ENCODE measurements at regions of chr9 and their contacts with region 1.

Region 1: GRCh38 chr9:5529683-5530221 is 19.4 kb downstream of the PDCD1LG2 start:
- DNase-seq: peak; percentile 73
- ATAC-seq: peak; percentile 62
- H3K4me3 ChIP-seq: peak overlapping the region; percentile 47; the same call in 1 of the 2 replicates
- H3K27ac ChIP-seq: peak overlapping the region; percentile 93
- H3K4me1 ChIP-seq: peaks cover 43% of the 10 kb centered on the region
- H3K27me3 ChIP-seq: no peaks in the 10 kb centered on the region
- CTCF ChIP-seq: no peak
- EP300 ChIP-seq: peak; percentile 9 to 59; a peak in 1 of 4 replicates
- POLR2A ChIP-seq: no peak
- RAD21 ChIP-seq: 0 out of 2 replicates have a peak, but pooled peaks have one; percentile 0

Region 2: GRCh38 chr9:5459289-5459829 is 70.4 kb before region 1 on chr9:
- CTCF ChIA-PET with region 1: no interaction called
- POLR2A ChIA-PET with region 1: interaction called, 5 read pairs
- RAD21 ChIA-PET with region 1: interaction called, 4 read pairs
- SMC1A ChIA-PET with region 1: interaction called, 19 read pairs
- in situ Hi-C with region 1: no loop called
- intact Hi-C with region 1: loop called (anchors 5 kb)
- DNase-seq: no peak
- ATAC-seq: peak; percentile 55
- H3K4me3 ChIP-seq: peak overlapping the region; percentile 35
- H3K27ac ChIP-seq: peak overlapping the region; percentile 81
- H3K4me1 ChIP-seq: peaks cover 32% of the 10 kb centered on the region
- H3K27me3 ChIP-seq: no peaks in the 10 kb centered on the region
- CTCF ChIP-seq: no peak
- EP300 ChIP-seq: peak; percentile 69 to 84; a peak in 2 of 4 replicates
- POLR2A ChIP-seq: no peak
- RAD21 ChIP-seq: no peak

Region 3: GRCh38 chr9:5479994-5480694 is 49.6 kb before region 1 on chr9:
- CTCF ChIA-PET with region 1: interaction called, 6 read pairs
- POLR2A ChIA-PET with region 1: interaction called, 5 read pairs
- RAD21 ChIA-PET with region 1: interaction called, 7 read pairs
- SMC1A ChIA-PET with region 1: interaction called, 15 read pairs
- in situ Hi-C with region 1: no loop called
- intact Hi-C with region 1: no loop called
- DNase-seq: no peak
- ATAC-seq: peak; percentile 85
- H3K4me3 ChIP-seq: no peak overlapping the region
- H3K27ac ChIP-seq: peak overlapping the region; percentile 62
- H3K4me1 ChIP-seq: peaks cover 27% of the 10 kb centered on the region
- H3K27me3 ChIP-seq: no peaks in the 10 kb centered on the region
- CTCF ChIP-seq: no peak
- EP300 ChIP-seq: peak; percentile 37 to 47; a peak in 2 of 4 replicates
- POLR2A ChIP-seq: no peak
- RAD21 ChIP-seq: no peak

Region 4: DNA sequence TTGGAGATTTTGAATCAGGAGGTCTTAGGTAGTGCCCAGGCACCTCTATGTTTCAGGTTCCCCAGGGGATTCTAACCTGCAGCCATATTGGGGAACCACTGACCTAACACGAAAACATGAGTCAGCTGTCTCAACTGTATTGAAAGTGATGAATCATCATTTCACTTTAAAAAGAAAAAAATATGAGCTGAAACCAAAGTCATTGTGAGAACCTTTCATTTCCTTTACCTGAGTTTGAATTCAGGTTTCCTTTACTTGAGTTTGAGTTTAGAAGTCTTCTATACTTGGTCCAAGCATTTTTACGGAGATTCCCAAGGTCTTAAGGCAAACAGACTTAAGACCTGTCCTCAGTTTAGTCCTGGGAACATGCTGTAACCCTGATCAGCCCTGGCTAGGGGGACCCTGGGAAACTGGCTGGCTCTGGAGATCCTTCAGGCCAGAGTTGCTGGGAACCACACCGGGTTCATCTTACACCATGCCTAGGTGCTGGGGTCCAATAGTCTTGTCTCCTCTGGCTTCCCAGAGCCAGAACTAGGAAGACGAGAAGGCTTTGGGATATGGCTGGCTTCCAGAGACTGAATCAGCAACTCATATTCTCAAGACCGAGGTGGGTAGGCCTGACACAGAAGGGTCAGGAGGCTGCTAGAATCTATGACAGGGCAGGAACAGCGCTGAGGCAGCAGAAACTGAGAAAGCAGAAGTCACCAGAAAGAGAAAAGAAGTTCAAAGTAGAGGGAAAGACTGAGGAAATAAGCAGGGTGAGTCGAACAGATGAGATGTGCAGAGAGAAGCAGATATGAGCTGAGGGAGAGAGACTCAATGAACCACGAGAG is 35.9 kb before region 1 on chr9:
- CTCF ChIA-PET with region 1: interaction called, 3 read pairs
- POLR2A ChIA-PET with region 1: interaction called, 4 read pairs
- RAD21 ChIA-PET with region 1: interaction called, 5 read pairs
- SMC1A ChIA-PET with region 1: interaction called, 18 read pairs
- in situ Hi-C with region 1: no loop called
- intact Hi-C with region 1: no loop called
- DNase-seq: peak; percentile 96
- ATAC-seq: peak; percentile 91
- H3K4me3 ChIP-seq: peak overlapping the region; percentile 30; the same call in 1 of the 2 replicates
- H3K27ac ChIP-seq: peak overlapping the region; percentile 92
- H3K4me1 ChIP-seq: peaks cover 16% of the 10 kb centered on the region
- H3K27me3 ChIP-seq: no peaks in the 10 kb centered on the region
- CTCF ChIP-seq: no peak
- EP300 ChIP-seq: peak in 1 of 2 experiments; percentile 65; a peak in 1 of 4 replicates
- POLR2A ChIP-seq: peak; percentile 63
- RAD21 ChIP-seq: 0 out of 2 replicates have a peak, but pooled peaks have one; percentile 9

Region 5: GRCh38 chr9:5518171-5518936 is 11.4 kb before region 1 on chr9:
- CTCF ChIA-PET with region 1: interaction called, 31 read pairs
- POLR2A ChIA-PET with region 1: interaction called, 67 read pairs
- RAD21 ChIA-PET with region 1: interaction called, 50 read pairs
- SMC1A ChIA-PET with region 1: interaction called, 87 read pairs
- in situ Hi-C with region 1: no loop called
- intact Hi-C with region 1: no loop called
- DNase-seq: no peak
- ATAC-seq: peak; percentile 49
- H3K4me3 ChIP-seq: peak overlapping the region; percentile 35; the same call in 1 of the 2 replicates
- H3K27ac ChIP-seq: peak overlapping the region; percentile 58
- H3K4me1 ChIP-seq: peaks cover 47% of the 10 kb centered on the region
- H3K27me3 ChIP-seq: no peaks in the 10 kb centered on the region
- CTCF ChIP-seq: no peak
- EP300 ChIP-seq: no peak
- POLR2A ChIP-seq: no peak
- RAD21 ChIP-seq: 0 out of 2 replicates have a peak, but pooled peaks have one; percentile 17

Region 6: GRCh38 chr9:5549658-5550310 is 20.0 kb after region 1 on chr9:
- CTCF ChIA-PET with region 1: interaction called, 6 read pairs
- POLR2A ChIA-PET with region 1: interaction called, 9 read pairs
- RAD21 ChIA-PET with region 1: interaction called, 8 read pairs
- SMC1A ChIA-PET with region 1: interaction called, 22 read pairs
- in situ Hi-C with region 1: no loop called
- intact Hi-C with region 1: no loop called
- DNase-seq: no peak
- ATAC-seq: no peak
- H3K4me3 ChIP-seq: no peak overlapping the region
- H3K27ac ChIP-seq: no peak overlapping the region
- H3K4me1 ChIP-seq: peaks cover 6% of the 10 kb centered on the region; the same call in 1 of the 2 replicates
- H3K27me3 ChIP-seq: no peaks in the 10 kb centered on the region
- CTCF ChIP-seq: no peak
- EP300 ChIP-seq: no peak
- POLR2A ChIP-seq: no peak
- RAD21 ChIP-seq: no peak

Region 7: DNA sequence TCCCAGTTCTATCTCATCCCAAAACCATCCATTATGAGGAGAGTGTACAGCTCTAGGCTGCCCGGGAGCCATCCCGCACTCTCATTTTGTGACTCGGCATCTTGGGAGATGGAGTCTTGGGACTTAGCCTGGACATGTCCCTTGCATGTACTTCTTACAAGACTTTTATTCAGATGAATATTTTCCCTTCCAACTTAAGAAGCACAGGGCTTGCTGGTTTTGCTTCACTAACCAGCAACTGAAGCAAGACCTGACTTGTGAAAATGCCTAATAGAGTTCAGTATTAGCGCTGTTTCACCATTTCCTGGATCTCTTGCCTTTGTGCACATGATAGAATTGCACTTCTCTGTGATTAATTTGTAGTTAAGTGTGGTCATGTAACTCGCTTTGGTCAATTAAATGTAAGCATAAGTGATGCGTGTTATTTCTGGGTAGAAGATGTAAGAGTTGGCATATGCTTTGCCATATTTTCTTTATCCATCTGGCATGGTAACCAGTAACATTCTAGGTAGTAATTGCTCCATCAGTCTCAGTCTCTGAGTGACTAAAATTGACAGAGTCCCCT is 36.4 kb after region 1 on chr9:
- CTCF ChIA-PET with region 1: interaction called, 7 read pairs
- POLR2A ChIA-PET with region 1: interaction called, 6 read pairs
- RAD21 ChIA-PET with region 1: interaction called, 19 read pairs
- SMC1A ChIA-PET with region 1: interaction called, 58 read pairs
- in situ Hi-C with region 1: no loop called
- intact Hi-C with region 1: no loop called
- DNase-seq: peak; percentile 91
- ATAC-seq: peak; percentile 91
- H3K4me3 ChIP-seq: no peak overlapping the region
- H3K27ac ChIP-seq: peak overlapping the region; percentile 80
- H3K4me1 ChIP-seq: peaks cover 39% of the 10 kb centered on the region
- H3K27me3 ChIP-seq: no peaks in the 10 kb centered on the region
- CTCF ChIP-seq: no peak
- EP300 ChIP-seq: 0 out of 4 replicates have a peak, but pooled peaks of 1 of the 2 experiments have one; percentile 49
- POLR2A ChIP-seq: no peak
- RAD21 ChIP-seq: no peak